ENCODE measurements at regions of chrX and their contacts with region 1.

Region 1: DNA sequence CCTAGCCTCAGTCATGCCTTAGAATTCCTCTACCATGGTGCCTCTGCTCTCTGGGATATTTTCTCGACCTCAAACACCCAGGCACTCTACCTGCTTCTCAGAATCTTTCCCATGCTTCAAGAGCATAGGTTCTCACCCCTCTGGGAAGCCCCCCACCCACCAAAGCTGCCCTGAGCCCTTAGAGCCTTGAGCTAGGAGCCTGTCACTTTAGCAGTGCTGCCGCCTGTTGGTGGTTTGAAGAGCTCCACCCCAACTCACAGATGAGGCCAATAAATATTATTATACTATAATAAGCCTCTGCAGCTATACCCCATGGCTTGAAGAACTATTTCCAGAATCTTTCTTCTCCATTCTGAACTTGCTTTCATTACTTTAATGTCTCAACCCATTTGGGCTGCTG is 109.7 kb downstream of the RTL5 start:
- DNase-seq: peak; percentile 39
- CTCF ChIP-seq: peak; percentile 52

Region 2: GRCh38 chrX:72126539-72127140 is 104.7 kb after region 1 on chrX:
- in situ Hi-C with region 1: loop called (anchors 10 kb)
- DNase-seq: peak; percentile 85
- CTCF ChIP-seq: peak; percentile 91

Measured in GM13977 (cell line).